ENCODE measurements at regions of chr13 and their contacts with region 1.

Region 1: GRCh38 chr13:79393564-79394249 is 12.3 kb downstream of the RBM26 start:
- DNase-seq: no peak
- H3K4me3 ChIP-seq: no peak overlapping the region
- H3K27ac ChIP-seq: no peak overlapping the region
- H3K27me3 ChIP-seq: no peaks in the 10 kb centered on the region
- CTCF ChIP-seq: no peak

Region 2: DNA sequence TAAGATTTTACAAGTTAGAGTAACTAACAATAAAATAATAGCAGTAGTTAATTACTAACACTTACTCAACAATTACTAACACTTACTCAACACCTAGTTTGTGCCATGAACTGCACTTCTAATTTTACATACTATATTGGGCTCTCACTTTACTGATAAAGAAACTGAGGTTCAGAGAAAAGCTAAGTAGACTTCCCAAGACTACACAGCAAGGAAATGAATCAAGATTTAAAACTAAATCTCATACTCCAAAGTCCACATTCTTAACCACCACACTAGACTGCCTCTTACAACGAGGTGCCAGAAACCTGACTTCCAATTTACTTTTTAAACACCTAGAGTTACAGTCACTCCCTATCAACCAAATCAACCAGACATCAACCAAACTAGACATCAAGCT is 12.7 kb before region 1 on chr13:
- CTCF ChIA-PET with region 1: interaction called, 20 read pairs
- POLR2A ChIA-PET with region 1: no interaction called
- DNase-seq: no peak
- H3K4me3 ChIP-seq: no peak overlapping the region
- H3K27ac ChIP-seq: no peak overlapping the region
- H3K27me3 ChIP-seq: no peaks in the 10 kb centered on the region
- CTCF ChIP-seq: no peak

Region 3: DNA sequence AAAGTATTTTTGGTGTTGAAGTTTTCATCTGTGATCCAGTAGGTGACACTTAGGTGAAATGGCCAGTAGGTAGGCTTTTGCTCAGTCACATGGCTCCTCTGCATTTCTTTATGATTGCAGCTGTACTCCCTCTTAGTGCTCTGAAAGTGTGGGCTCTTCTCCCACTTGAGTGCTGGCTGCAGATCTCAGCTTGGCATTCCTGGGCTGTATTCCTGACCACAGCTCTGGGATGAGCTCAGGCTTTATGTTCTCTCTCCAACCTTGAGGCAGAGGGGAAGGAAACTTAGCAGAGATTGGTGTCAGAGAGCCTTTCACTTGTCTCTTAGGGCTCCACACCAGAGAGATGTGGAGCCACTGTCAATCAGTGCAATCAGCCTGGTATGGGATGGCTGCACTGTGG is 341.5 kb after region 1 on chr13:
- CTCF ChIA-PET with region 1: no interaction called
- POLR2A ChIA-PET with region 1: no interaction called
- DNase-seq: no peak
- H3K4me3 ChIP-seq: no peak overlapping the region
- H3K27ac ChIP-seq: no peak overlapping the region
- H3K27me3 ChIP-seq: no peaks in the 10 kb centered on the region
- CTCF ChIP-seq: no peak

Measured in AG04450 (cell line).